ENCODE measurements at regions of chr4 and their contacts with region 1.

Region 1: DNA sequence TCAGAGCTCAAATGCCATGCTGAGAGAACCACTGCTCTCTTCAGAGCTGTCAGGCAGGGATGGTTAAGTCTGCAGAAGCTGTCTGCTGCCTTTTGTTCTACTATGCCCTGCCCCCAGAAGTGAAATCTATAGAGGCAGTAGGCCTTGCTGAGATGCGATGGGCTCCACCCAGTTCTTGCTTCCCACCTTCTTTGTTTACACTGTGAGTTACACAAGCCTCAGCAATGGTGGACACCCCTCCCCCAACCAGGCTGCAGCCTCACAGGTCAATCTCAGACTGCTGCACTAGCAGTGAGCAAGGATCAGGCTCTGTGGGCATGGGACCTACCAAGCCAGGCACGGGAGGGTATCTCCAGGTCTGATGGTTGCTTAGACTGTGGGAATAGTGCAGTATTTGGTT is 271.6 kb downstream of the CENPC start:
- DNase-seq: no peak
- H3K4me3 ChIP-seq: no peak overlapping the region
- H3K27ac ChIP-seq: no peak overlapping the region
- H3K4me1 ChIP-seq: no peaks in the 10 kb centered on the region
- H3K27me3 ChIP-seq: no peaks in the 10 kb centered on the region
- CTCF ChIP-seq: no peak
- POLR2A ChIP-seq: no peak

Region 2: GRCh38 chr4:65316534-65316933 is 1957.1 kb before region 1 on chr4:
- intact Hi-C with region 1: loop called (anchors 5 kb)
- DNase-seq: no peak
- H3K4me3 ChIP-seq: no peak overlapping the region
- H3K27ac ChIP-seq: no peak overlapping the region
- H3K4me1 ChIP-seq: no peaks in the 10 kb centered on the region
- H3K27me3 ChIP-seq: no peaks in the 10 kb centered on the region
- CTCF ChIP-seq: no peak
- POLR2A ChIP-seq: no peak

Region 3: DNA sequence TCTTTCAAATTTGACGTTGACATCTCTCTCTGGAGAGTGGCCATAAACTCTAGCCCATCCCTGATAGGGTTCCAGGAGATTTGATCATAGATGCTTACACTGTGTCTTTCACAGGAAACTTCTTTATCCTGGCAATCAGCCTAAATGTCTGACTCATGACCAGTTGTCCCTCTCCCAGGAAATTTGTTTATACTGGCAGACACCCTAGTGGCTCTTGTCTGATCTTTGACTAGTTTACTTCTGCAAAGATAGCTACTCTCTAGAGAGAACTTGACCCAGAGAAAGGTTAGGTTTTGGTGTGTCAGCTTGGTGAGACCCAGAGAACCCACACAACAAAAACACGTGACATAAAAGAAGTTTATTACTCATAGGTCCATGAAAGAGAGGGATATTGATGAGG is 238.2 kb before region 1 on chr4:
- intact Hi-C with region 1: no loop called
- DNase-seq: no peak
- H3K4me3 ChIP-seq: no peak overlapping the region
- H3K27ac ChIP-seq: no peak overlapping the region
- H3K4me1 ChIP-seq: no peaks in the 10 kb centered on the region
- H3K27me3 ChIP-seq: no peaks in the 10 kb centered on the region
- CTCF ChIP-seq: no peak
- POLR2A ChIP-seq: no peak

Measured in breast epithelium (tissue), 4 donors.